Activated naive CD4-positive, alpha-beta T cell treated with anti-CD3 and anti-CD28 coated beads for 36 hours (primary cell): ENCODE measurements at regions of chr3 and their contacts with region 1.

Region 1: DNA sequence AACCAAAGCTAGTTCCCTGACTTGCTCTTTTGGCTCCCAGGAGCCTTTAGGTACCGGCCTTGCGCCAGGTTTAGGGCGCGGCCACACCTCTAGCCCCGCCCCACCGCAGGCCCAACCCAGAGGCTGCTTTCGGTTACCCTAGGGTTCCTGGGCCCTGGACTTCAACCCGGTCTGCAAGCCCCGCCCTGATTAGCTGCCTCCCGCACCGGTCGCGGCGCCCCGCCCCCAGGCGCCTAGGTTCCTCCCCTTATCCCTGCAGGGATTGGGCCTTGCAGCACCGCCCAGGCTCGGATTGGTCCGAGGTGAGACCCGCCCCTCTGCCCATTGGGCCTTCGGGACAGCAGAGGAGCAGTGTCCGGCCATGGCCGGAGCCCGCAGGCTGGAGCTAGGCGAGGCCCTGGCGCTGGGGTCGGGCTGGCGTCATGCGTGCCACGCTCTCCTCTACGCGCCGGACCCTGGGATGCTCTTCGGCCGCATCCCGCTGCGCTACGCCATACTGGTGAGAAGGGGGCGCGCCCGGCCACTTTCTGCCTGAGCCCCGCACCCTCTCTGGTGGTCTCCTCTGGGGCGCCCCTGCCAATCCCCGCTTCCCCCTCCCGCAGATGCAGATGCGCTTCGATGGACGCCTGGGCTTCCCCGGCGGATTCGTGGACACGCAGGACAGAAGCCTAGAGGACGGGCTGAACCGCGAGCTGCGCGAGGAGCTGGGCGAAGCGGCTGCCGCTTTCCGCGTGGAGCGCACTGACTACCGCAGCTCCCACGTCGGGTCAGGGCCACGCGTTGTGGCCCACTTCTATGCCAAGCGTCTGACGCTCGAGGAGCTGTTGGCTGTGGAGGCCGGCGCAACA is at the start of gene NUDT16:
- DNase-seq: peak; percentile 97
- H3K4me3 Mint-ChIP-seq: peak within 1 kb of the TSS; percentile 94
- H3K27ac Mint-ChIP-seq: peak within 1 kb of the TSS; percentile 81
- H3K4me1 Mint-ChIP-seq: peaks cover 21% of the 10 kb centered on the region
- H3K27me3 Mint-ChIP-seq: no peaks in the 10 kb centered on the region
- total RNA-seq, gene NUDT16: 4.9 to 5.9 TPM

Region 2: GRCh38 chr3:129893581-129894070 is 1488.0 kb before region 1 on chr3 and contains the start of gene TMCC1:
- CTCF ChIA-PET with region 1: no interaction called
- intact Hi-C with region 1: loop called (anchors 5 kb)
- DNase-seq: peak; percentile 87
- H3K4me3 Mint-ChIP-seq: peak within 1 kb of the TSS; percentile 92
- H3K27ac Mint-ChIP-seq: peak within 1 kb of the TSS; percentile 70
- H3K4me1 Mint-ChIP-seq: peaks cover 38% of the 10 kb centered on the region
- H3K27me3 Mint-ChIP-seq: no peaks in the 10 kb centered on the region
- total RNA-seq, gene TMCC1: 13.6 to 14.3 TPM

Region 3: GRCh38 chr3:131026321-131027178 is 355.1 kb before region 1 on chr3 and contains the starts of genes ASTE1 and NEK11:
- CTCF ChIA-PET with region 1: no interaction called
- intact Hi-C with region 1: loop called (anchors 1 kb)
- DNase-seq: peak; percentile 92
- H3K4me3 Mint-ChIP-seq: peak within 1 kb of the TSS; percentile 92
- H3K27ac Mint-ChIP-seq: peak within 1 kb of the TSS; percentile 94
- H3K4me1 Mint-ChIP-seq: peaks cover 42% of the 10 kb centered on the region
- H3K27me3 Mint-ChIP-seq: no peaks in the 10 kb centered on the region
- total RNA-seq, gene ASTE1: 10.8 to 11.2 TPM
- total RNA-seq, gene NEK11: 1.1 to 1.9 TPM

Region 4: GRCh38 chr3:131502530-131503245 is 121.0 kb after region 1 on chr3 and contains the start of gene MRPL3:
- CTCF ChIA-PET with region 1: no interaction called
- intact Hi-C with region 1: loop called (anchors 1 kb)
- DNase-seq: peak; percentile 90
- H3K4me3 Mint-ChIP-seq: peak within 1 kb of the TSS; percentile 91
- H3K27ac Mint-ChIP-seq: peak within 1 kb of the TSS; percentile 88
- H3K4me1 Mint-ChIP-seq: peaks cover 37% of the 10 kb centered on the region
- H3K27me3 Mint-ChIP-seq: no peaks in the 10 kb centered on the region
- total RNA-seq, gene MRPL3: 151 to 161 TPM